SK-N-SH (cell line): ENCODE measurements at regions of chr3 and their contacts with region 1.

Region 1: GRCh38 chr3:4303187-4304123 is at the start of gene SETMAR:
- DNase-seq: peak; percentile 92
- H3K4me3 ChIP-seq: peak within 1 kb of the TSS; percentile 63 to 87
- H3K27ac ChIP-seq: peak within 1 kb of the TSS; percentile 62 to 93
- H3K4me1 ChIP-seq: peaks cover 0 to 7% of the 10 kb centered on the region in 2 experiments; a peak in 2 of 4 replicates
- H3K27me3 ChIP-seq: no peaks in the 10 kb centered on the region
- CTCF ChIP-seq: no peak
- EP300 ChIP-seq: no peak
- RAD21 ChIP-seq: no peak
- polyA plus RNA-seq, gene SETMAR: 10.6 and 13.3 TPM in 2 replicates

Region 2: DNA sequence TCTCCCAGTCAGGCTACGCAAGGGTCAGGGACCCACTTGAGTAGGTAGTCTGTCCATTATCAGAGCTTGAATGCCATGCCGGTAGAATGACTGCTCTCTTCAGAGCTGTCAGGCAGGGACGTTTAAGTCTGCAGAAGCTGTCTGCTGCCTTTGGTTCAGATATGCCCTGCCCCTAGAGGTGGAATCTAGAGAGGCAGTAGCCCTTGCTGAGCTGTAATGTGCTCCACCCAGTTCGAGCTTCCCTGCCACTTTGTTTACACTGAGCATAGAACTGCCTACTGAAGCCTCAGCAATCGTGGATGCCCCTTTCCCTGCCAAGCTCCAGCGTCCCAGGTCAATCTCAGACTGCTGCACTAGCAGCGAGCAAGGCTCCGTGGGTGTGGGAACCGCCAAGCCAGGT is 57.8 kb before region 1 on chr3:
- CTCF ChIA-PET with region 1: no interaction called
- POLR2A ChIA-PET with region 1: no interaction called
- DNase-seq: no peak
- H3K4me3 ChIP-seq: no peak overlapping the region
- H3K27ac ChIP-seq: no peak overlapping the region
- H3K4me1 ChIP-seq: no peaks in the 10 kb centered on the region
- H3K27me3 ChIP-seq: no peaks in the 10 kb centered on the region
- CTCF ChIP-seq: no peak
- EP300 ChIP-seq: no peak
- RAD21 ChIP-seq: no peak

Region 3: GRCh38 chr3:4314688-4315087 is 11.2 kb after region 1 on chr3:
- CTCF ChIA-PET with region 1: interaction called, 15 read pairs
- POLR2A ChIA-PET with region 1: no interaction called
- DNase-seq: no peak
- H3K4me3 ChIP-seq: no peak overlapping the region
- H3K27ac ChIP-seq: no peak overlapping the region
- H3K4me1 ChIP-seq: no peaks in the 10 kb centered on the region
- H3K27me3 ChIP-seq: no peaks in the 10 kb centered on the region
- CTCF ChIP-seq: peak; percentile 56
- EP300 ChIP-seq: no peak
- RAD21 ChIP-seq: no peak